HCT116 (cell line): ENCODE measurements at regions of chr16 and their contacts with region 1.

Region 1: DNA sequence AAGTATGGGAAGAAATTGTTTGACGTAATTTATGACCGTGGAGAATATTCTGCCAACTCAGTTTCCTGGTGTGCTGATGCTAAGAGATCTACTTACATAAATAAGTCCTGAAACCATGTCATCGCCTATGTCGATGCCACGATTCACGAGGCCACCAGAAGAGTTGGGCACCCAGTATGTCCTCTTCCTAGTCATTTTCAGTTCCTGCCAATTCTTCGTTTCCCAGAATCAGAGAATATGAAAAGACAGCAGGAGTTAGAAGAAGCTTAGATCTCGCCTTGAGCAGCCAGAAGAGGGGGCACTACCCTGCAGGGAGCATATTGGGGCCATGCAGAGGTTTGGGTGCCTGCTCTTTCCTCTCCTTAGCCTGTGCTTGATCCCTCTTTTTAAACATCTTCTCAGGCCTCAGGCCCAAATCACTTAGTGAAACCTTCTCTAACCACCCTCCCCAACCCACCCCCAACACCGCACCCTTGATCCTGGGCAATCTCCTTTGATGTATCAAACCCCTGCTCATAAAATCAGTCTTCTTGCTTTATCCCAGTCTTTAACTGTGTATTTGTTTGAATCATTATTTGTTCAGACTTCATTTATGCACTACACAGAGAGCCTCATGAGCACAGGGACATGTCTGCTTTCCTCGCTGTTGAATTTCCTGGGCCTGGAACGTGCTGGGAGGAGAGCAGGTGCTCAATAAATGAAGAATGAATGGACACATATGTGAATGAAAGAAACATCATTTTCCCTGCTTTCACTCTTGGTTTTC is 12.2 kb upstream of the LONP2 start:
- DNase-seq: peak; percentile 35
- ATAC-seq: peak; percentile 96
- H3K4me3 ChIP-seq: no peak overlapping the region
- H3K27ac ChIP-seq: no peak overlapping the region
- H3K4me1 ChIP-seq: no peaks in the 10 kb centered on the region
- H3K27me3 ChIP-seq: no peaks in the 10 kb centered on the region
- CTCF ChIP-seq: peak; percentile 56 to 72 (median 61); a peak in 5 of 6 replicates
- POLR2A ChIP-seq: no peak
- RAD21 ChIP-seq: peak; percentile 72

Region 2: GRCh38 chr16:48526058-48526957 is 294.4 kb after region 1 on chr16:
- CTCF ChIA-PET with region 1: interaction called, 9 read pairs
- POLR2A ChIA-PET with region 1: no interaction called
- RAD21 ChIA-PET with region 1: interaction called in 1 of 2 experiments, 6 read pairs
- intact Hi-C with region 1: loop called (anchors 1 kb)
- DNase-seq: peak; percentile 66
- ATAC-seq: peak; percentile 96
- H3K4me3 ChIP-seq: no peak overlapping the region
- H3K27ac ChIP-seq: no peak overlapping the region
- H3K4me1 ChIP-seq: peaks cover 0 to 26% of the 10 kb centered on the region in 2 experiments; a peak in 2 of 4 replicates
- H3K27me3 ChIP-seq: no peaks in the 10 kb centered on the region
- CTCF ChIP-seq: peak; percentile 63 to 87 (median 66)
- POLR2A ChIP-seq: no peak
- RAD21 ChIP-seq: peak; percentile 97

Region 3: DNA sequence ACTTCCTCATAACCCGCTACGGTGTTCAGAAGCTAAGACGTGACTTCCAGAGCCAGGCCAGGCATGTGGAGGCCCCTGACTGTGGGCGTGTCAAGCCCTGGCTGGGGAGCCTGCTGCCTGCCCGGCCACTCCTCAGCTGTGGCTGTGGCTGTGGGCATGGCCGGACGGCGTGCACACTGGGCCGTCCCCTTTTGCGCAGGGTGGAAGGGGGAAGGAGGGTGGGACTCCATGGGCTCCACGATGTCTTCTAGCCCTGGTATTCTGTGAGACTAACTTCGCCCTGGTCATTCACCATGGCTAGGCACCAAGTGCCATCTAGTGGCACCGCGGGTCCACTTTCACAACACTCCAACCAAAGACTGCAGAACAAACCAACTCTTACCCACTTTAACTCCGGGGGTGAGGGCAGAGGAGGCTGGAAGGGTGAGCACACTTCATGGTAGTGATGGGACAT is 310.1 kb after region 1 on chr16:
- CTCF ChIA-PET with region 1: no interaction called
- POLR2A ChIA-PET with region 1: no interaction called
- RAD21 ChIA-PET with region 1: no interaction called
- intact Hi-C with region 1: loop called (anchors 1 kb)
- DNase-seq: no peak
- ATAC-seq: peak; percentile 86
- H3K4me3 ChIP-seq: no peak overlapping the region
- H3K27ac ChIP-seq: no peak overlapping the region
- H3K4me1 ChIP-seq: no peaks in the 10 kb centered on the region
- H3K27me3 ChIP-seq: no peaks in the 10 kb centered on the region
- CTCF ChIP-seq: peak in 2 of 3 experiments; percentile 49 to 57; a peak in 5 of 6 replicates
- POLR2A ChIP-seq: no peak
- RAD21 ChIP-seq: peak; percentile 64

Region 4: GRCh38 chr16:48892893-48893292 is 661.0 kb after region 1 on chr16:
- CTCF ChIA-PET with region 1: no interaction called
- POLR2A ChIA-PET with region 1: no interaction called
- RAD21 ChIA-PET with region 1: no interaction called
- intact Hi-C with region 1: no loop called
- DNase-seq: peak; percentile 19
- ATAC-seq: peak; percentile 54; the same call in 1 of the 2 replicates
- H3K4me3 ChIP-seq: no peak overlapping the region
- H3K27ac ChIP-seq: no peak overlapping the region
- H3K4me1 ChIP-seq: no peaks in the 10 kb centered on the region
- H3K27me3 ChIP-seq: peaks cover 44% of the 10 kb centered on the region
- CTCF ChIP-seq: no peak
- POLR2A ChIP-seq: no peak
- RAD21 ChIP-seq: no peak